Heart right ventricle (tissue), 16 donors: ENCODE measurements at regions of chr21 and their contacts with region 1.

Region 1: DNA sequence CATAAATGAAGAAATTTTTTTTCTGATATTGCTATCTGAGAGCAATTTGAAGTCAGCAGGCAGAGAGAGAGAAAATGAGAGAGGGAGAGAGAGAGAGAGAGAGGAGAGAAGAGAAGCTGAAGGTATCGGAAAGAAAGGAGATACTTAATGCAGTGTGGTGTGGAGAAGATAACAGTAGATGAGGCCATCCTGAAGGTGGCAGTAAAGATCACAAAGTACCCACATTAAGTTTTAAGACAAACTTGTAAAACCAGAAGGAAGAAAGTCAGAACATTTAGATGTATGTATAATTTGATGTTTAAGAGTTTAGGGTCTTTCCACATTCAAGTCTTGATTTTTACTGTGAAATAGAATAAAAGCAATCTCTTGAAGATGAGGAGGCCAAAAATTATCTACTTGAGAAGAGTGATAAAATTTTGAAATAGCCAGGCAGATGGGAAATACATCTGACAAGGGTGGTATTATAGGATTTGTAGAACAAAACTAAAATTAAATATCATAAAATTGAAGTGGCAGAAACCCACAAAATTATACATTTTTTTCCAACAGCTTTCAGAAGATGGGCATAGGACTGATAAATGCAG is 1753.4 kb downstream of the MRPL39 start:
- DNase-seq: no peak
- ATAC-seq: no peak
- H3K4me3 ChIP-seq: no peak overlapping the region
- H3K27ac ChIP-seq: no peak overlapping the region
- H3K4me1 ChIP-seq: no peaks in the 10 kb centered on the region
- H3K27me3 ChIP-seq: peaks cover 0 to 17% (median 0%) of the 10 kb centered on the region in 7 donors
- CTCF ChIP-seq: peak in 7 of 9 donors; percentile 24 to 60 (median 48)

Region 2: GRCh38 chr21:23900727-23901126 is 46.8 kb after region 1 on chr21:
- intact Hi-C with region 1: loop called in 1 of 10 experiments (anchors 10 kb)
- DNase-seq: no peak
- ATAC-seq: no peak
- H3K4me3 ChIP-seq: no peak overlapping the region
- H3K27ac ChIP-seq: no peak overlapping the region
- H3K4me1 ChIP-seq: no peaks in the 10 kb centered on the region
- H3K27me3 ChIP-seq: no peaks in the 10 kb centered on the region
- CTCF ChIP-seq: no peak

Region 3: GRCh38 chr21:24110846-24111245 is 257.0 kb after region 1 on chr21:
- intact Hi-C with region 1: no loop called
- DNase-seq: no peak
- ATAC-seq: no peak
- H3K4me3 ChIP-seq: no peak overlapping the region
- H3K27ac ChIP-seq: no peak overlapping the region
- H3K4me1 ChIP-seq: no peaks in the 10 kb centered on the region
- H3K27me3 ChIP-seq: no peaks in the 10 kb centered on the region
- CTCF ChIP-seq: no peak

Region 4: DNA sequence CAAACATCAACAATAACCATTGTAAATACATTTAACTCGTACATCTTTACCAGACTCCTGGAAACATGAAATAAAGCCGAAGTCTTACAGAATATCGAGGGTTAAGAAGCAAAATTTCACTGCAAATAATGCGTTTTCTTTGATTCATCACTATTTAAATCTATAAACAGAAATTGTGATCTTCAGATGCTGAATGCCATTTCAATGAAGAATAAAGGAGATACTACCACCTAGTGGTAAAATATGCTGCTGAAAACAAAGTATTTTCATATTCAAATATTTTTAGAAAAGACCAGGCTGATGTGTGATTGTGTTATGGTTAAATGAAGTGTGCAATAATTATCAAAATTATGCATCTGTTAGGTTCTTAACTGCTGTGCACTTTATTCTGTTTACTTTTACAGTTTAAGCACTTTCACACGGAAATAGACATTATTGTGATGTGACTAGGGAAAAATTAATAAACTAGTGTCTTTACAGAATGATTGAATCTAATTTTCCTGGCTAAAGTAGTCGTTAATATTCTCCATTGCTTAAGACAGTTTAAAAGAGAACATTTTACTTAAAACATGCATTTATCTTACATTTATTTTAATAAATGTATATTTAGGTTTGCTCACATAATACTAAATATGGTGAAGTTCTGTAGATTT is 660.3 kb after region 1 on chr21:
- intact Hi-C with region 1: loop called in 2 of 10 experiments (anchors 10 kb)
- DNase-seq: no peak
- ATAC-seq: no peak
- H3K4me3 ChIP-seq: no peak overlapping the region
- H3K27ac ChIP-seq: no peak overlapping the region
- H3K4me1 ChIP-seq: no peaks in the 10 kb centered on the region
- H3K27me3 ChIP-seq: no peaks in the 10 kb centered on the region
- CTCF ChIP-seq: peak in 7 of 9 donors; percentile 37 to 67 (median 52)

Region 5: DNA sequence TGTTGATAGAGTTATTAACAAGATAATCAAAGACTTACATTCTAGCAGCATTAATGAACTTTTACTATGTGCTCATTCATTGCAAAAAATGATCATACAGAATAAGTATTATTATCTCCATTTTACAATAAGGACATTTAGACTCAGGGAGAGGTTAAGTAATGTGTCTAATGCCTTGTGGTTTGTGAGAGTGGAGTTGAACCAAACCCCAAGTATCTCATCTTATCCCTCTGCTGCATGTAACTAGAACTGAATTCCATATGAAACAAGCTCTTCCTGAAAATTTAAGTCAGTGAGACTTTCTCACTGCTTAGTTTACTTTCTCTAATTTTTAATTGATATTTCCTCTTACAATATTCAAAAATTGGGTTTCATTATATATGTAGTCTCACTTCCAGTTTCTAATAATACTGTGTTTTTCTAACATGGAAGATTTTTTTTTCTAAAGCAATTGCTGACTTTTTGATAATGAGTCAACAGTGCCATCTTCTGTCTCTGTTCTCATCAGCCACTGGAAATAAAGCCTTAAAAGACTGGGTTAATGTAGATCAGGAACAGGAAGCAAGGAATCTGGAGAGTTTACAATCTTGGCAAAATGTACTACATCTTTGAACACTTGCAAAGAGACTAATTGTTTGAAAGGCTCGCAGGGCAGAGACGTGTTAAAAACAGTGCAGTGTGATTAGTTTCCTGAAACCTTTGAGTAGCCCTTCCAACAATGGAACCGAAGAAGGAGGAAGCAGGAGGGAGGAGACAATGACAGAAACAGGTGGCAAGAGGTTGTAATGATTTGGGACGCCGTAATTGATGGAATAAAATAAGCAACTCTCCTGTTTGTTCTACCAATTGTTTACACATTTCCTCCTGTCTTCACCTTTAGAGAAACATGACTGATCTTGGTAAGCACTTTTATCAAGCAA is 1185.8 kb after region 1 on chr21:
- intact Hi-C with region 1: loop called in 1 of 10 experiments (anchors 10 kb)
- DNase-seq: no peak
- ATAC-seq: peak in 2 of 8 donors; percentile 29 to 33
- H3K4me3 ChIP-seq: no peak overlapping the region
- H3K27ac ChIP-seq: no peak overlapping the region
- H3K4me1 ChIP-seq: peaks cover 0 to 6% (median 0%) of the 10 kb centered on the region in 9 donors
- H3K27me3 ChIP-seq: no peaks in the 10 kb centered on the region
- CTCF ChIP-seq: peak in 7 of 9 donors; percentile 27 to 61 (median 36)